K562 (cell line): ENCODE measurements at regions of chr2 and their contacts with region 1.

Region 1: DNA sequence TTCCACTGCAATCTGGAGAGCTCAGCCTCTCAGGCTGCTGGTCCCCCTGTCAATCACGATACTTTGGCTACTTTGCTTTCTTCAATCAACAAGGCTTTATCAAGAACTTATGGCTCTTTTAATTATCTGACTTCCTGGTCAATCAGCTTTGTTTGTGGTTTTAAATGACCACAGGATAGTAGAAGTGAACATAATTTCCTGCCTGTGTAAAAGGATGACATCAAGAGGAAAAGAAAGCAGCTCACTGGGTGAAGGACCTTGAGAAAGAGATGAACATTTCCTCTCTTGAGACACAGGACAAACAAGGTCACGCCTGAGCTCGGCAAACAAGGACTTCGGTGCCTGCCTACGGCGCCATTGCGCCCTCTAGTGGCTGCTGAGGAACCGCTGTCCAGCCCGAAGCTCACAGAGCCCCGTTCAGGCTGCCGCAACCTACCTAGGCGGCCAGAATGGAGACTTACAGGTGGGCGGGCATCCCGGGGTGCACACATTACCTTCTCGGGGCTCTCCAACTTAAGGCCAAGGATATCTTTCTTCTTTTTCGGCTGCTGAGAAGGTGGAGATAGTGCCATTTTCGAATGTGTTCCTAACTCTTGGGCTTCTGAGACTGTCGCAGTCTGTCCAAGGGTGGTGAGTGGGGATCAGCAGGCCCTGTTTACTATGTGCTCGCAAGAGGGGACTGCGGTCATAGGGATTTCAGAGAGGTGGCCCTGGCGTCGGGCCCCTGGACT is 54.0 kb downstream of the IL1RL2 start:
- DNase-seq: peak; percentile 78 to 91 (median 80)
- ATAC-seq: peak; percentile 99
- H3K4me3 ChIP-seq: no peak overlapping the region
- H3K27ac ChIP-seq: no peak overlapping the region
- H3K4me1 ChIP-seq: peaks cover 0 to 7% of the 10 kb centered on the region in 2 experiments; a peak in 3 of 5 replicates
- H3K27me3 ChIP-seq: peaks cover 0 to 9% of the 10 kb centered on the region in 2 experiments; a peak in 1 of 5 replicates
- CTCF ChIP-seq: peak; percentile 94 to 98 (median 95)
- EP300 ChIP-seq: no peak; the same call in 1 of the 2 replicates
- POLR2A ChIP-seq: no peak
- RAD21 ChIP-seq: peak; percentile 95 to 98

Region 2: GRCh38 chr2:100959225-100959880 is 1281.5 kb before region 1 on chr2:
- CTCF ChIA-PET with region 1: no interaction called
- POLR2A ChIA-PET with region 1: no interaction called
- in situ Hi-C with region 1: no loop called
- intact Hi-C with region 1: no loop called
- DNase-seq: no peak
- ATAC-seq: no peak
- H3K4me3 ChIP-seq: no peak overlapping the region
- H3K27ac ChIP-seq: no peak overlapping the region
- H3K4me1 ChIP-seq: no peaks in the 10 kb centered on the region
- H3K27me3 ChIP-seq: peaks cover 36 to 62% of the 10 kb centered on the region in 2 experiments
- CTCF ChIP-seq: no peak
- EP300 ChIP-seq: no peak
- POLR2A ChIP-seq: no peak
- RAD21 ChIP-seq: no peak

Region 3: GRCh38 chr2:102005989-102006885 is 234.6 kb before region 1 on chr2:
- CTCF ChIA-PET with region 1: interaction called, 14 read pairs
- POLR2A ChIA-PET with region 1: interaction called, 4 read pairs
- in situ Hi-C with region 1: no loop called
- intact Hi-C with region 1: loop called (anchors 1 kb)
- DNase-seq: peak; percentile 66 to 76 (median 68)
- ATAC-seq: peak; percentile 98
- H3K4me3 ChIP-seq: no peak overlapping the region
- H3K27ac ChIP-seq: no peak overlapping the region
- H3K4me1 ChIP-seq: peaks cover 0 to 5% of the 10 kb centered on the region in 2 experiments; a peak in 1 of 5 replicates
- H3K27me3 ChIP-seq: peaks cover 4 to 25% of the 10 kb centered on the region in 2 experiments; a peak in 3 of 5 replicates
- CTCF ChIP-seq: peak; percentile 66 to 86 (median 80)
- EP300 ChIP-seq: no peak
- POLR2A ChIP-seq: no peak
- RAD21 ChIP-seq: peak; percentile 62 to 82

Region 4: GRCh38 chr2:102063941-102064678 is 176.7 kb before region 1 on chr2:
- CTCF ChIA-PET with region 1: no interaction called
- POLR2A ChIA-PET with region 1: interaction called, 3 read pairs
- in situ Hi-C with region 1: no loop called
- intact Hi-C with region 1: loop called (anchors 5 kb)
- DNase-seq: peak; percentile 87 to 95 (median 90)
- ATAC-seq: peak; percentile 90
- H3K4me3 ChIP-seq: no peak overlapping the region
- H3K27ac ChIP-seq: peak overlapping the region; percentile 84
- H3K4me1 ChIP-seq: peaks cover 38 to 54% of the 10 kb centered on the region in 2 experiments
- H3K27me3 ChIP-seq: no peaks in the 10 kb centered on the region
- CTCF ChIP-seq: no peak
- EP300 ChIP-seq: peak; percentile 71; the same call in 1 of the 2 replicates
- POLR2A ChIP-seq: peak; percentile 65
- RAD21 ChIP-seq: 0 out of 4 replicates have a peak, but pooled peaks of 1 of the 2 experiments have one; percentile 29

Region 5: GRCh38 chr2:102166189-102166845 is 74.5 kb before region 1 on chr2:
- CTCF ChIA-PET with region 1: no interaction called
- POLR2A ChIA-PET with region 1: no interaction called
- in situ Hi-C with region 1: no loop called
- intact Hi-C with region 1: loop called (anchors 5 kb)
- DNase-seq: peak in 2 of 4 experiments; percentile 25 to 48
- ATAC-seq: peak; percentile 91
- H3K4me3 ChIP-seq: no peak overlapping the region
- H3K27ac ChIP-seq: no peak overlapping the region
- H3K4me1 ChIP-seq: no peaks in the 10 kb centered on the region
- H3K27me3 ChIP-seq: no peaks in the 10 kb centered on the region
- CTCF ChIP-seq: peak; percentile 46 to 77 (median 55); a peak in 5 of 6 replicates
- EP300 ChIP-seq: no peak
- POLR2A ChIP-seq: no peak
- RAD21 ChIP-seq: peak; percentile 88 to 89

Region 6: GRCh38 chr2:102187496-102188150 is 53.2 kb before region 1 on chr2:
- CTCF ChIA-PET with region 1: interaction called, 3 read pairs
- POLR2A ChIA-PET with region 1: no interaction called
- in situ Hi-C with region 1: no loop called
- intact Hi-C with region 1: loop called (anchors 5 kb)
- DNase-seq: no peak
- ATAC-seq: no peak
- H3K4me3 ChIP-seq: no peak overlapping the region
- H3K27ac ChIP-seq: no peak overlapping the region
- H3K4me1 ChIP-seq: peaks cover 0 to 3% of the 10 kb centered on the region in 2 experiments; a peak in 1 of 5 replicates
- H3K27me3 ChIP-seq: no peaks in the 10 kb centered on the region
- CTCF ChIP-seq: no peak
- EP300 ChIP-seq: no peak
- POLR2A ChIP-seq: no peak
- RAD21 ChIP-seq: no peak

Region 7: DNA sequence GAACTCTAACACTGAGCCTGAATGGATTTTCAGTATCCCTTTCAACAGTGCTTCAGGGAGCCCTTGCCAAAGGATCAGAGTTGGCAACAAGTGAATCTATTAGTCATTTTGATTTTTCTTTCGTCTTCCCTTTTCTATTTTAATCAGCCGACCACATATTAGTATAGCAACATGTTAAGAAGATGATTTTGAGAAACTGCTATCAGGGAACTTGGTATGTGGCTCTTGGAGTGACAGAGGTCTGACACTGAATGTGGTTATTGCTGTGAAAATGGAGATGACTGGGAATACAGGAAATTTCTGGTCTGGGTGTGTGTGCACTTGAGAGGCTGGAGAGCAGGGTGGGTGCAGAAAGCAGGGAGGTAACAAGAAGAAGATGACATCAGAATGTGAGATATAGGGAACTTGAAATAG is 41.9 kb after region 1 on chr2:
- CTCF ChIA-PET with region 1: no interaction called
- POLR2A ChIA-PET with region 1: no interaction called
- in situ Hi-C with region 1: no loop called
- intact Hi-C with region 1: no loop called
- DNase-seq: no peak
- ATAC-seq: no peak
- H3K4me3 ChIP-seq: no peak overlapping the region
- H3K27ac ChIP-seq: no peak overlapping the region
- H3K4me1 ChIP-seq: no peaks in the 10 kb centered on the region
- H3K27me3 ChIP-seq: peaks cover 0 to 2% of the 10 kb centered on the region in 2 experiments; a peak in 1 of 5 replicates
- CTCF ChIP-seq: no peak
- EP300 ChIP-seq: no peak
- POLR2A ChIP-seq: no peak
- RAD21 ChIP-seq: no peak

Region 8: GRCh38 chr2:102350137-102350793 is 109.5 kb after region 1 on chr2:
- CTCF ChIA-PET with region 1: interaction called, 7 read pairs
- POLR2A ChIA-PET with region 1: no interaction called
- in situ Hi-C with region 1: loop called (anchors 5 kb)
- intact Hi-C with region 1: loop called (anchors 5 kb)
- DNase-seq: no peak
- ATAC-seq: peak; percentile 50; the same call in 2 of the 3 replicates
- H3K4me3 ChIP-seq: no peak overlapping the region
- H3K27ac ChIP-seq: no peak overlapping the region
- H3K4me1 ChIP-seq: peaks cover 0 to under 1% of the 10 kb centered on the region in 2 experiments; a peak in 1 of 5 replicates
- H3K27me3 ChIP-seq: no peaks in the 10 kb centered on the region
- CTCF ChIP-seq: no peak
- EP300 ChIP-seq: no peak
- POLR2A ChIP-seq: no peak
- RAD21 ChIP-seq: no peak